AG04450 (cell line): ENCODE measurements at regions of chr11 and their contacts with region 1.

Region 1: GRCh38 chr11:46489661-46490560 is 98.3 kb upstream of the CHRM4 start:
- DNase-seq: peak; percentile 20
- H3K4me3 ChIP-seq: no peak overlapping the region
- H3K27ac ChIP-seq: no peak overlapping the region
- H3K27me3 ChIP-seq: no peaks in the 10 kb centered on the region
- CTCF ChIP-seq: peak; percentile 80

Region 2: GRCh38 chr11:46451759-46452158 is 38.2 kb before region 1 on chr11:
- CTCF ChIA-PET with region 1: interaction called, 11 read pairs
- POLR2A ChIA-PET with region 1: no interaction called
- DNase-seq: no peak
- H3K4me3 ChIP-seq: no peak overlapping the region
- H3K27ac ChIP-seq: no peak overlapping the region
- H3K27me3 ChIP-seq: no peaks in the 10 kb centered on the region
- CTCF ChIP-seq: no peak

Region 3: DNA sequence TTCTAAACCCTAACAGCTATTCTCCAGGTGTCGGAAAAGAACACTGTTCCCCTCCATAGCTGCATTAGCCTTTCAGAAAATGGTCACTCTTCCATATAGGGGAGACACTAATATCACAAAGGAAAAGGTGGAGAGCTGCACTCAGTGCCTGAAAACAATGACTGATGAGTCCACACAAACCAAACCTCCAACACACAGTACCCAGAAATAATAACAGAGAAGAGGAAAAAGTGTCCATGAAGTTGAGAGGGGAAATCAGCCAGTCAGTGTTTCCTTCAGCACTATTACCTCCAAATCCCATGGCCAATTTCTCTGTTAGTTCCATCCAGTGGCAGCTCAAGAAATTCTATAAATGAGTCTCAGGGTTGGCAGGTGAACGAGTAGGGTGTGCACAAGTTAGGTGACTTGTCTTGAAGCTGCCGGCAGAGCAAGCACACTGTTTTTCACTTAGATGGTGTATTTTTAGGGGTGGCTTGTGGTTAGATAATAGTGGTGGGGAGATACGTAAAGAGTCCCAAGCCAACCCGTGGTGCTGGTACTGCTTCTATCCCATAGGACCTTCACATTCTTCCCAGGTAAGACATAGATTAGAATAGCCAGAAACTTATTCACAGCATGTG is 13.9 kb before region 1 on chr11:
- CTCF ChIA-PET with region 1: interaction called, 37 read pairs
- POLR2A ChIA-PET with region 1: interaction called, 5 read pairs
- DNase-seq: no peak
- H3K4me3 ChIP-seq: no peak overlapping the region
- H3K27ac ChIP-seq: no peak overlapping the region
- H3K27me3 ChIP-seq: no peaks in the 10 kb centered on the region
- CTCF ChIP-seq: no peak

Region 4: DNA sequence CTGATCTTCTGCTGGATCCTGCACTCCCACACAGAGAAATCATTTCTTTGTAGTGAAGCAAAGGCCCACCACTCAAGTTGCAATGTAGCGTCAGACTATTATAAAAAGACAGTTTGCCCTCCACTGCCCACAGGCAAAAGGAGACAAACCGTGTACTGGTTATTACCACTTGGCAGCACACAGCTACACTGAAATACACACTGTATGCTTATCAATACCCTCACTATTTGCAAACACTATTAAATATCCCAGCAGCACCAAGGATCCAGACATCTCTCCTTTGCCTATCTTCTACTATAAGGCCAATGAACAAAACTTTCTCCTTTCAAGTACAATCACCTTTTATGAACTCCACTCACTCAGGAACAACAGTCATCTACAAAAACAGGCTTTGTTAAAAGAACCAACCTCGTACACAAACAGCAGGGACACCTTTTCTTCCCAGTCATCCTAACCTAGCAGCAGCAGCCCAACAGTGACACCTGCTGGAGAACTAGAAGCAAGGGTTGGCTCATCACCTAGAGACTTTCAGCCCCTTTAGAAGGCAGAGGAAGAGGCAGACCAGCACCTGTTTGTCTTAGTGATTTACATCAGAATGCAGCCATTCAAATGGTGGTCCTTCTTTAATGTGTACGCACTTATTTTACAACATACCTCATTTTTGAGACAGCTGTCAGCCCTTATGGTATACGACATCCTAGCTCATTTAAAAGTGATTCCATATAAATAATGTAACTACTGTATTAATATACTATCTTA is 47.8 kb after region 1 on chr11:
- CTCF ChIA-PET with region 1: interaction called, 29 read pairs
- POLR2A ChIA-PET with region 1: no interaction called
- DNase-seq: peak; percentile 61
- H3K4me3 ChIP-seq: no peak overlapping the region
- H3K27ac ChIP-seq: no peak overlapping the region
- H3K27me3 ChIP-seq: no peaks in the 10 kb centered on the region
- CTCF ChIP-seq: peak; percentile 99

Region 5: GRCh38 chr11:46616998-46617675 is 127.2 kb after region 1 on chr11 and contains the starts of genes ATG13 and HARBI1:
- CTCF ChIA-PET with region 1: interaction called, 23 read pairs
- POLR2A ChIA-PET with region 1: no interaction called
- DNase-seq: peak; percentile 51
- H3K4me3 ChIP-seq: peak within 1 kb of the TSS; percentile 100
- H3K27ac ChIP-seq: peak within 1 kb of the TSS; percentile 97
- H3K27me3 ChIP-seq: no peaks in the 10 kb centered on the region
- CTCF ChIP-seq: no peak
- polyA plus RNA-seq, gene ATG13: 57.9 and 62.5 TPM in 2 replicates
- polyA plus RNA-seq, gene HARBI1: 4.3 and 4.4 TPM in 2 replicates

Region 6: DNA sequence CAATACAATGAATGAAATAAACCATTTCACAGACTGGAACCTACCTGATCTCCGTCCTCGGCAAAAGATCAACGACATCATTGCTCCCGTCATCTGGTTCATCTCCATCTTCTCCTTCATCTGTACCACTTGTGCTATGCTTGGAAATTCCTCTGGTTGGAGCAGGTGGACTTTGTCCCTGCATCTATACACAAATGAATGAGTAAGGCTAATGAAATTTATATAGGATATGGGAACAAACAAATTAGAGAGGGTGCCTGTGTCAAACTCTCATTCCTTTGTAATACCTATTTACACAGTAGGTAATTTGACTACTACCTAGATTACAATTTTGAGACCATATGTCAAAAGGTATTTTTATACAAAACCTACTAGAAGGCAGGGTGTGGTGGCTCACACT is 288.5 kb after region 1 on chr11:
- CTCF ChIA-PET with region 1: no interaction called
- POLR2A ChIA-PET with region 1: no interaction called
- DNase-seq: no peak
- H3K4me3 ChIP-seq: no peak overlapping the region
- H3K27ac ChIP-seq: no peak overlapping the region
- H3K27me3 ChIP-seq: no peaks in the 10 kb centered on the region
- CTCF ChIP-seq: no peak